Cardiac septum (tissue), 1 donor: ENCODE measurements at regions of chrX and their contacts with region 1.

Region 1: DNA sequence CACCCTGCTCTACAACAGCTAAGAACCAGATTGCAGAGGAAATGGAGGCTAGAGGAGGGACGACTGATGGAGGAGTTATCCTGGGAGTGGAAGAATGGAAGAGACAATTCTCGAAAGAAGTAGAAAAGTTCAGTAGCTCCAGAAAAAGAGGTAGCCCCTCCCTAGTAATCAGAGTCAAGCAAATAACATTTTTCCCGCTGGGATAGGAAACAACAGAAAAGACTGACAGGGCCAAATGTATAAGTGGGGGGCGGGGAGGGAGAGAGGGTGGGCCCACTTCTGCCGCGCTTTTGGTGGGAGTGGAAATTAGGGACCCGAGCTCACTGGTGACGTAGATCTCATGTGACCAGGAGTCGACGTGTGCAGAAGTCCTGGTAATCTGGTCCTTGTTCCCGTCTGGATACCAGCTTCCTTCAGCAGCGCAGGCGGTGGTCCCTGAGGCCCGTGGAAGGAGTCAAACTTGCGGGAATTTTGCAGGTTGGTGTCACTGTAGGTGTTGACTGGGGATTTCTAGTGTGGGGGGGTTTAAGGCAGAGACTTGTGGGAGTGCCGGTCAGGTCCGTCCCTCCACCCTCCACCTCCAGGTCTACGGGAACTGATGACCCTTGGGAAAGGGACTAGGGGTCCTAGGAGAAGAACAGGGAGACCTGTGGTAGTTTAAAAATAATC is at the start of gene TCEAL9:
- DNase-seq: no peak
- total RNA-seq, gene TCEAL9: 28.6 TPM

Region 2: DNA sequence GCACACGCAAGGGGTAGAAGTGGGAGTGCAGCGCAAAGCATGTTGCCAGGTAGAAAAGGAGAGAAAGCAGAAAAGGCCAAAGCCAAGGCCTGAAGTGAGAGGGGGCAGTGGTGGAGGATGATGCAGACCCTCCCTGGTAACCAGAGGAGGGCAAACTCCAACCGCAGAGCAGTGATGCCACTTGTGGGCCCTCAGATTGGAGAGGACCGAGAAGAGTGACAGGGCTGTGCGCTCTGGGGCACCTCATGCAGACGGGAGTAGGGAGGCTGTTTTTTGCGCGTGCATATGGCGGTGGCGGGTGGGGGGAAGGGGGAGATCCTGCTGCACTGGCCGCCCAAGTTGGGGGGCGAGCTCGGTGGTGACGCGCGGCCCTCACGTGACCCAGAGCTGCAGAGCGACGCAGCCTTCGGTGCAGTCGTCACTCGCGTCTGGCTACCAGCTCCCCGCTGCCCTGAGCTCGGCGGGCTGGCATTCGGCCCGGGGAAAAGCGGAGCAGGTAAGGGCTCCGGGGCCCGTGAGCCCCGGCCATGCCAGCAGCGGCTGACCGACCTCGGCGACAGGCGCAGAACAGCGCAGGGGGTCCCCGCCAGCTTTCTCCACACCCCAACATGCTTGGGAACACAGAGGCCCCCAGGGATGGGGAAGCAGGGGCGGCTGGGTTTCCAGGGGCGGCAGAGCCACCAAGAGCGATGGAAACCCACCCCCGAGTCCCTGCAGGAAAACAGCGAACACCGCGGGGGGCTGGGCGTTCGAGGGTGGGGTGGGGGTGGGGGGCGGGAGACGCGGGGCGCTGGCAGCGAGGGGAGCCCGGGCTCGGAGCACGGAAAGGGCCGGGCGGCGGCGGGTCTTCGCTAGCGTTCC is 20.1 kb after region 1 on chrX and contains the start of gene BEX3:
- intact Hi-C with region 1: loop called (anchors 2 kb)
- DNase-seq: no peak
- total RNA-seq, gene BEX3: 80.2 TPM

Region 3: DNA sequence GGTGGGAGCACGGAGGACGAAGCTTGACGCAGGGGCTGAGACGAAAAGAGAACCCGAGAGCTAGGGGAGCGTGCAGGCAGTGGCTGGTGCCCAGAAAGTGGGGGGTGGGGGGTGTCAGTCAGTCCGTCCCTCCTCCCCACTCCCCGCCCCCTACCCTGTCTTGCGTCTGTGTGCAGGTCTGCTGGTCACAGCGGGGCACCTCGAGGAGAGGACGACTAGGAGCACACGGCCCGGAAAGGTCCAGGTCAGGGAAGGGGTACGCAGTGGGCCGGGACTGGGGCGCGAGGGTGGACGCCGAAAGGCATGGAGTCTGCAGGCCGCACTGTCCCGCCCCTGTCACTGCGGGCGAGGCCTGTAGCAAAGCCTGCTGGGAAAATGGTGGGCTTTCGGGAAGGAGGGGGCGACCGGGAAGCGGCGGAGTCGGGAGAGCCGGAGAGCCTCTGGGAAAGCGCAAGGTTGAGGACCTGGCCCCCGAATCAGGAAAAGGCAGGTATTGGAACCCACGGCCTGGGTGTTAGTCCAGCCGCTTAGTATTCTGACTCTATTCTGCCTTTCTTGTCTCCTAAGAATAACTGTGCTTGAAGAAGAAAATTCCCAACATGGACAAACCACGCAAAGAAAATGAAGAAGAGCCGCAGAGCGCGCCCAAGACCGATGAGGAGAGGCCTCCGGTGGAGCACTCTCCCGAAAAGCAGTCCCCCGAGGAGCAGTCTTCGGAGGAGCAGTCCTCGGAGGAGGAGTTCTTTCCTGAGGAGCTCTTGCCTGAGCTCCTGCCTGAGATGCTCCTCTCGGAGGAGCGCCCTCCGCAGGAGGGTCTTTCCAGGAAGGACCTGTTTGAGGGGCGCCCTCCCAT is 273.3 kb after region 1 on chrX:
- intact Hi-C with region 1: no loop called
- DNase-seq: peak; percentile 82